ENCODE measurements at regions of chr11 and their contacts with region 1.

Region 1: GRCh38 chr11:91115116-91115515 is 892.3 kb upstream of the CHORDC1 start:
- DNase-seq: no peak
- H3K4me3 ChIP-seq: no peak overlapping the region
- CTCF ChIP-seq: no peak

Region 2: GRCh38 chr11:91023731-91024130 is 91.4 kb before region 1 on chr11:
- in situ Hi-C with region 1: no loop called
- DNase-seq: no peak
- H3K4me3 ChIP-seq: no peak overlapping the region
- CTCF ChIP-seq: no peak

Region 3: GRCh38 chr11:91066456-91067047 is 48.6 kb before region 1 on chr11:
- in situ Hi-C with region 1: no loop called
- DNase-seq: no peak
- H3K4me3 ChIP-seq: no peak overlapping the region
- CTCF ChIP-seq: no peak

Region 4: DNA sequence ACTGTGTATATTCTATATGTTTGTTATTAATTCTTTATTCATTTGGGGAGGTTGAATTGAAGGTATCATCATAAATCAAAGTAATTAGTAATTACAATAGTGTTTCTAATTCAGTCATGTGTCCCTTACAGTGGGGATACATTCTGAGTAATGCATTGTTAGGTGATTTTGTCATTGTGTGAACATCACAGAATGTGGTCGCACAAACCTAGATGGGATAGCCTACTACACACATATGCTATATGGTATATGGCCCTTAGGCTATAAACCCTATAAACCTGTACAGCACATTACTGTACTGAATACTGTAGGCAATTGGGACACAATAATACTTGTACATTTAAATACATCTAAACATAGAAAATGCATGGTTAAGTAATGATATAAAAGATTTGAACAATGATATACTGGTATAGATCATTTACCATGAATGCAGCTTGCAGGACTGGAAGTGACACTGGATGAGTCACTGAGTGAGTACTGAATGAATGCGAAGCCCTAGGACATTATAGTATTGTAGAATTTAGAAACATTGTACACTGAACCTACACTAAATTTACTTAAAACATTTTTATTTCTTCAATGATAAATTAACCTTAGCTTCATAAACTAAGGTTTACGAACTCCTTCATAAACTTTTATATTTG is 43.9 kb after region 1 on chr11:
- in situ Hi-C with region 1: loop called (anchors 5 kb)
- DNase-seq: no peak
- H3K4me3 ChIP-seq: no peak overlapping the region
- CTCF ChIP-seq: no peak

Region 5: DNA sequence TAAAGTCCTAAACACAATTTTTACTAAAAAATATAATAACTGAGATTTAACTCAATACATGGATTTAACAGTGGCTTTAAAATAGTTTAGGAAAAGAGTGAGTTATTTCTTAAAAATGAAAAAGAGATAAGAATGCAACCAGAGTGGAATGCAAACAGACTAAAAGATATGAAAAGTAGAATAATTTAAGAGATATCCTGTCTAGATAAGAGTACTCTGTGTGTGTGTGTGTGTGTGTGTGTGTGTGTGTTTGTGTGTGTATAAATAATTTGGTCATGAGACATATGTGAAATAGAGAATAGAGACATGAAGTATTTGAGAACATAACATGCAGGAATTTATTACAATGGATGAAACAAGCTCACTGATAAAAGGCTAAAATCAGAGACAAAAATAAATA is 94.6 kb after region 1 on chr11:
- in situ Hi-C with region 1: no loop called
- DNase-seq: no peak
- H3K4me3 ChIP-seq: no peak overlapping the region
- CTCF ChIP-seq: no peak

Region 6: DNA sequence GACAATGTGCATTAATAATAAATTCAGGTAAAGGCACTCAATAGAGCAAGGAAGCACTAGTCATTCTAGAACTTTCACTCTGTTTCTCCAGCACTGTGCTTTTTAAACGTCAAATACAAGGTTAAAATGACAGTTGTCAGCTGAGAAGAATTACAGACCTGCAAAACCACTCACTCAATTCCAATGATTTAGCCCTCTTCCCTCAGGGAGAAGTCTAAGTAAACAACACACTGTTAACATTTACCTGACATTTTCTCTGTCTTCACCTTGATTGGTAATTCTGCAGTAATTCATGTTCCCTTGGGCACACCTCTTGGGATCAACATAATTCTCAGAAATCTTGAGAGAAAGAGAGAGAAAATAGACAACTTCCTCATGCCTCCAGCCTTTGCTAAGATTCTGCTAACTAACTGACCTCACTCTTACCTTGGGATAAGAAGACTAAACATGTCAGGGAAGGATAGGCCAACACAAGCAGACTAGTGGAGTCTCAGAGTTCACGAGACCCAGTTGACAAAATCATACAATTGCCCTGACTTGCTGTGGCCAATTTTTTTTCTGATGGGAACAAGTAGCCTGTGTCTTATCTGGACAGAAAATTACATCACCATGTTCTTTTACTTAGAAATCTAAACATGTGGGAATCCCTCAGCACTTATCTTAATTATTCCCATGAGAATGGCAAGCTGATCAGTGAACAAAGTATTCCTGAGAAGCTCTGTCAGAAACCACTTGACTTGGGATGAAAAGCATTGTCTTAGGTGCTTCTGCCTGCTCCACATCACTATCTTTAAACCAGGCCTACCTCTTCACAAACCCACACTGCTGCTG is 592.8 kb after region 1 on chr11:
- in situ Hi-C with region 1: no loop called
- DNase-seq: no peak
- H3K4me3 ChIP-seq: no peak overlapping the region
- CTCF ChIP-seq: no peak

Measured in astrocyte of the cerebellum (primary cell).